Right cardiac atrium (tissue), 5 donors: ENCODE measurements at regions of chr2 and their contacts with region 1.

Region 1: DNA sequence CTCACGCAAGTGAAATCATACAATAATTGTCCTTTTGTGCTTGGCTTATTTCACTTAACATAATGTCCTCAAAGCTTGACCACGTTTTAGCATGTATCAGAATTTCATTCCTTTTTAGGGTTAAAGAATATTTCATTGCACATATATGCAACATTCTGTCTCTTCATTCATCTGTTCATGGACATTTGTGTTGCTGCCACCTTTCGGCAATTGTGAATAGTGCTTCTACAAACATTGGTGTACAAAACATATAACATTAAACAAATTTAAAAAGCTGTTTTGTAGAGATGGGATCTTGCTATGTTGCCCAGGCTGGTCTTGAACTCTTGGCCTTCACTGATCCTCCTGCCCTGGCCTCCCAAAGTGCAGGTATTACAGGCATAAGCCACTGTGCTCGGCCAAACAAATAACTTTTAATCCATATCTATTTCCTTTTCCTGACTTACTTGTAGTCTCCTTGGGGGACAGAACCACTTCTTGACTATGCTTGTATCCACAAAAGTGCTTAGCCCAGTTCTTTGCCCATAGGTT is 209.3 kb downstream of the SLC4A3 start:
- DNase-seq: no peak
- ATAC-seq: no peak
- H3K4me3 ChIP-seq: no peak overlapping the region
- H3K27ac ChIP-seq: no peak overlapping the region
- H3K4me1 ChIP-seq: no peaks in the 10 kb centered on the region
- H3K27me3 ChIP-seq: no peaks in the 10 kb centered on the region

Region 2: GRCh38 chr2:219744600-219744999 is 92.1 kb before region 1 on chr2:
- intact Hi-C with region 1: loop called in 3 of 4 experiments (anchors 5 to 10 kb)
- DNase-seq: no peak
- ATAC-seq: no peak
- H3K4me3 ChIP-seq: no peak overlapping the region
- H3K27ac ChIP-seq: no peak overlapping the region
- H3K4me1 ChIP-seq: peaks cover 4% of the 10 kb centered on the region
- H3K27me3 ChIP-seq: no peaks in the 10 kb centered on the region